WTC11 (cell line): ENCODE measurements at regions of chr11 and their contacts with region 1.

Region 1: GRCh38 chr11:82867495-82868082 is 32.6 kb downstream of the PRCP start:
- DNase-seq: peak; percentile 79
- ATAC-seq: peak; percentile 88
- H3K4me3 Mint-ChIP-seq: no peak overlapping the region
- H3K27ac Mint-ChIP-seq: no peak overlapping the region; the same call in 1 of the 2 replicates
- H3K4me1 Mint-ChIP-seq: peaks cover 21% of the 10 kb centered on the region
- H3K27me3 Mint-ChIP-seq: no peaks in the 10 kb centered on the region
- CTCF ChIP-seq: peak; percentile 68

Region 2: DNA sequence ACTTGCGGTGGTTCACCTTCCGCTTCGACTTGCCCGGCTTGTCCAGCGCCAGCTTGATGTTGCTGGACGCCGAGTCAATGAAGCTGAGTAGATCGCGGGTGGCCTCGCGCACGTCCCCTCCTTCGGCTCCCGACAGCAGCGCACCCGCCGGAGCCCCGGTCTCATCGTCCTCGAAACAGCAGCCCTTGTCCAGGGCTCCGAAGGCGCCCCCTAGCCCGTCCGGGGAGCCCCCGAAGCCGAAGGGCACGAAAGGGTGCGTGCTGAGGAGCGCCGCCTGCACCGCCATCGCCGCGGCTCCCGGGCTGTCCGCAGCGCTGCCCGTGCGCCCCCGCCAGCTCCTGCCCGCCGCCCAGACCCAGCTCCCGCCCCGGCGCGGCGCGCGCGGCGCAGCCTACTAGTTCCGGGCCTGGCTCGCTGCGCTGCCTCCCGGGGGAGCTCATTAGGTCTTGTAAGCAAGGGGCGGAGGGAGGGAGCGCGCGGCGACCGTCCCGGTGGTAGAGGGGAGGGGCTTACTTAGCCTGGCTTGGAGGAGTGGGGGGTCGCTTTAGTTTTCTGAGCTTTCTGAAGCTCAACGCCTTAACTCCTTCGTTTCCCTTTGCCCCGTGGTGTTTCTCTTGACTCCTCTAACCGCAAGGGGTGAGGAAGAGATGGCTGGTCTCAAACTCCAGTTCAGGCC is 134.0 kb before region 1 on chr11 and contains the start of gene FAM181B:
- CTCF ChIA-PET with region 1: interaction called, 17 read pairs
- POLR2A ChIA-PET with region 1: interaction called, 3 read pairs
- DNase-seq: peak; percentile 83
- ATAC-seq: peak; percentile 81
- H3K4me3 Mint-ChIP-seq: peak within 1 kb of the TSS; percentile 68
- H3K27ac Mint-ChIP-seq: no peak within 1 kb of the TSS
- H3K4me1 Mint-ChIP-seq: peaks cover 34% of the 10 kb centered on the region
- H3K27me3 Mint-ChIP-seq: peaks cover 59% of the 10 kb centered on the region
- CTCF ChIP-seq: no peak
- total RNA-seq, gene FAM181B: 0.80 to 1.1 TPM (median 1.0 TPM) in 3 replicates

Region 3: GRCh38 chr11:82845356-82846353 is 21.9 kb before region 1 on chr11:
- CTCF ChIA-PET with region 1: interaction called, 23 read pairs
- POLR2A ChIA-PET with region 1: interaction called, 3 read pairs
- DNase-seq: no peak
- ATAC-seq: peak; percentile 69
- H3K4me3 Mint-ChIP-seq: no peak overlapping the region
- H3K27ac Mint-ChIP-seq: no peak overlapping the region
- H3K4me1 Mint-ChIP-seq: peaks cover 15% of the 10 kb centered on the region
- H3K27me3 Mint-ChIP-seq: no peaks in the 10 kb centered on the region
- CTCF ChIP-seq: no peak

Region 4: DNA sequence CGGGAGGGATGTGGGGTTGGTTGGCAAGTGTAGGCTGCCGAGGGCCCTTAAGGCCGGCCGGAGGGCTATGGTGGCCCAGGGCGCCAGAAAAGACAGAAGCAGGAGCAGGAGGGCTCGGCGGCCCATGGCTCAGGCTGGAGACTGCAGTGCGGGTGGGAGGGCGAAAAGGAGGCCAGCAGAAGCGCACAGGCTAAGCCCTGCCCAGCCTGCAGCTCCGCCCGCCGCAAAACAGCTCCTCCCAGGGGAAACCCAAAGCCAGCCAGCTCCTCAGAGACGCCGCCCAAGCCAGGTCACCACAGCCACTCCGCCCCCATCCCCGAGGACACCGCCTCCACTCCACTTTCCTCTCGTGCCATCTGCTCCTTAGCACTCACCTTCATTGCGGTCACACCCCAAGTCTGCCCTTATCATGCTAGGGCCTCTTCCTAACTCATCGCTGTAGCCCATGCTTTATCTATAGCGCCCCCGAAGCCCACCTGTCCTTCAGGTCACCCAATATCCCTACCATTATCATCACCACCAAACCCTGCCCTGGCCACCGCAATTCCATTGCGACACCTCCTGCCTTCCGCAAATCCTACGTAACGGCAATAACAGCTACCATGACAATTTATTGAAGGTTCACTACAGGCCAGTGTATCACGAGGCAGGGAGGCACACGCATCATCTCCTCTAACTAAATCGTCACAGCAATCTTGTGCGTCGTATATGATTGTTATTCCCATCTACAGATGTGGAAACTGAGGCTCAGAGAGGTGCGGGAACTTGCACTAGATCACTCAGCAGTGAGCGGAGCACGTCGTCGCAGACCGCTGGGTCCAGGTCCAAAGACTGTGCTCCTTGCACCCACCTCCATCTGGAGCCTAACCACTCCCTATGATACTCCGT is 32.9 kb after region 1 on chr11 and contains the start of gene PRCP:
- CTCF ChIA-PET with region 1: interaction called, 85 read pairs
- POLR2A ChIA-PET with region 1: interaction called, 19 read pairs
- DNase-seq: peak; percentile 95
- ATAC-seq: peak; percentile 90
- H3K4me3 Mint-ChIP-seq: peak within 1 kb of the TSS; percentile 100
- H3K27ac Mint-ChIP-seq: peak within 1 kb of the TSS; percentile 100
- H3K4me1 Mint-ChIP-seq: peaks cover 28% of the 10 kb centered on the region
- H3K27me3 Mint-ChIP-seq: no peaks in the 10 kb centered on the region; the same call in 1 of the 2 replicates
- CTCF ChIP-seq: no peak
- total RNA-seq, gene PRCP: 53.9 to 65.1 TPM (median 63.4 TPM) in 3 replicates